ENCODE measurements at regions of chr12 and their contacts with region 1.

Region 1: DNA sequence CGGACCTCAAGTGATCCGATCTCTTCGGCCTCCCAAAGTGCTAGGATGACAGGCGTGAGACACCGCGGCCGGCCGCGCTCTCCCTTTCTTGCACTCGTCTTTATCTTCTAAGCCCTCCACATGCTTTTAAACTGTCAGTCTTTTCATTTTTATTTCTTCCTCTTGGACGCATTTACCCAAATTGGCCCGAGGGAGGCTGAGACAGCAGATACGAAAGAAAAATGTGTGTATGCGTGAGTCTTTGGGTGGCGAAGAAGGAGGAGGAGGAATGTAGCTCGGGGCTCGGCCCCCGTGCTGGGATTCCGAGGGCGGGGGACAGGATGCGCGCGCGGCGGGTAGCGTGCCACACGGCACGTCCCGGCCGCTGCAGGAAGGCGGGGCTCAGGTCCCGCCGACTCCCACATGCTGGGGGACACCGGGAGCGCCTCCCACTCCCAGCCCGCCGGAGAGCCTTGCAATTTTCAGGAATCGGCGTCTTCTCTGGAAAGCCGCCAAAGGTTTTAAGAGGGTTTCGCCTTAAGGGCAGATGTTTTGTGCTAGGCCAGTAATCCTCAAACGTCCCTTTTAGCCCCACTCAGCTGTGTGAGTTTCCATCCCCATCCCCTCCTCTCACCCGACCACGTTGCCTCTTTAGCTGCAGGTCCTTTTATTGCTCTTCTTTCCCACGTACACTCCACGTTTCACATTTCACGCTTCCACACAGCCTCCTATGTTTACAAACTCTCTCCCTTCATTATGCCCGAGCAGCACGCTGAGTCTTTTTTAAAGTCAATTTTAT is 34.7 kb upstream of the SLC2A3 start:
- DNase-seq: peak; percentile 89
- H3K4me3 Mint-ChIP-seq: peak overlapping the region; percentile 84
- H3K27ac Mint-ChIP-seq: peak overlapping the region; percentile 100
- H3K4me1 Mint-ChIP-seq: peaks cover 39% of the 10 kb centered on the region
- H3K27me3 Mint-ChIP-seq: no peaks in the 10 kb centered on the region

Region 2: GRCh38 chr12:7989827-7990551 is 19.3 kb after region 1 on chr12:
- CTCF ChIA-PET with region 1: interaction called, 11 read pairs
- POLR2A ChIA-PET with region 1: interaction called, 51 read pairs
- DNase-seq: peak; percentile 88
- H3K4me3 Mint-ChIP-seq: peak overlapping the region; percentile 65
- H3K27ac Mint-ChIP-seq: peak overlapping the region; percentile 86
- H3K4me1 Mint-ChIP-seq: peaks cover 56% of the 10 kb centered on the region
- H3K27me3 Mint-ChIP-seq: no peaks in the 10 kb centered on the region